Endothelial cell of umbilical vein (primary cell): ENCODE measurements at regions of chr21 and their contacts with region 1.

Region 1: GRCh38 chr21:15064576-15065391 is at the start of gene NRIP1:
- DNase-seq: peak; percentile 92
- H3K4me3 ChIP-seq: peak within 1 kb of the TSS; percentile 80 to 96 (median 92)
- H3K27ac ChIP-seq: peak within 1 kb of the TSS; percentile 95
- H3K4me1 ChIP-seq: peaks cover 30% of the 10 kb centered on the region
- H3K27me3 ChIP-seq: peaks cover 0 to 3% of the 10 kb centered on the region in 2 experiments
- CTCF ChIP-seq: no peak
- POLR2A ChIP-seq: peak; percentile 66
- total RNA-seq, gene NRIP1: 24.0 and 26.6 TPM in 2 replicates

Region 2: DNA sequence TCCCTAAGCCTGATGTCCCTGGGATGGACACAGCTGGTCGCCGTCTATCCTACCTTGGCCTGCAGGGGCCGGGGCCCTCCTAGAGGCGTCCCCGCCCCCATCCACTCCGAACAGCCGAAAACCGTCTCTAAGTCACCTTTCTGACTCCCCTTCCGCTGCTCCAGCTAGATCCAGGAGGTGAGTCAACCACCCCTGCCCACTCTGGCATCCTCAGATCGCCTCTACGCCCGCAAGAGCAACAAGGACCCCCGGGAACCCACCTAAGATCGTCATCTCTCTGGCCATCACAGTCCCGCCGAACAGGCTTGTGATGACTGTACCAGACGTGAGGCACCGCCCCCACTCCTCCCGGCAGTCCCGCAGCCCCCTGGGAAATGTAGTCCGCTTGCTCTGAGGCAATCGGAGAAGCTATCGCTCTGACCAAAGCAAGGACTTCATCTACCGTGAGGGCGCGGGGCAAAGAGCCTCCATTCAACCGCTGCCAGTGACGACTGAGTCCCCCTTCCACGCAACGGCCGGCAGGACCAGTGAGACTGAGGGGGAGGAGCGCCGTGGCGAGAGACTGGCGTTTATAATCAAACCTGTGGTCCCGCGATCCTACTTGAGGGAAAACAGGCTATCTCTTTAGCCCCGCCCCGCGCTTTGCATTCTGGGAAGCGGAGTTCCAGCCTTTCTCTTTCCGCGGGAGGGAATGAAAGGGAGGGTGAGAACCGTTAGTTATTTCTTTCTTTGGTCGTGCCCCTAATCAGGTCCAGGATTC is 681.8 kb before region 1 on chr21 and contains the start of gene HSPA13:
- CTCF ChIA-PET with region 1: no interaction called
- POLR2A ChIA-PET with region 1: no interaction called
- dilution Hi-C with region 1: no loop called
- intact Hi-C with region 1: loop called (anchors 2 kb)
- DNase-seq: peak; percentile 100
- H3K4me3 ChIP-seq: peak within 1 kb of the TSS; percentile 85 to 91 (median 85)
- H3K27ac ChIP-seq: peak within 1 kb of the TSS; percentile 93
- H3K4me1 ChIP-seq: peaks cover 26% of the 10 kb centered on the region
- H3K27me3 ChIP-seq: no peaks in the 10 kb centered on the region
- CTCF ChIP-seq: peak in 1 of 2 donors; percentile 14
- POLR2A ChIP-seq: peak; percentile 76
- total RNA-seq, gene HSPA13: 40.4 and 44.8 TPM in 2 replicates

Region 3: GRCh38 chr21:14877570-14878228 is 187.1 kb before region 1 on chr21:
- CTCF ChIA-PET with region 1: interaction called, 9 read pairs
- POLR2A ChIA-PET with region 1: interaction called, 3 read pairs
- dilution Hi-C with region 1: no loop called
- intact Hi-C with region 1: loop called (anchors 1 kb)
- DNase-seq: peak; percentile 75
- H3K4me3 ChIP-seq: no peak overlapping the region
- H3K27ac ChIP-seq: peak overlapping the region; percentile 58
- H3K4me1 ChIP-seq: peaks cover 47% of the 10 kb centered on the region
- H3K27me3 ChIP-seq: no peaks in the 10 kb centered on the region
- CTCF ChIP-seq: no peak
- POLR2A ChIP-seq: no peak

Region 4: GRCh38 chr21:15138490-15138889 is 73.7 kb after region 1 on chr21:
- CTCF ChIA-PET with region 1: no interaction called
- POLR2A ChIA-PET with region 1: no interaction called
- dilution Hi-C with region 1: no loop called
- intact Hi-C with region 1: loop called (anchors 2 kb)
- DNase-seq: no peak
- H3K4me3 ChIP-seq: no peak overlapping the region
- H3K27ac ChIP-seq: no peak overlapping the region
- H3K4me1 ChIP-seq: peaks cover 3% of the 10 kb centered on the region
- H3K27me3 ChIP-seq: peaks cover 6 to 11% of the 10 kb centered on the region in 2 experiments
- CTCF ChIP-seq: no peak
- POLR2A ChIP-seq: no peak

Region 5: GRCh38 chr21:15199414-15200364 is 134.9 kb after region 1 on chr21:
- CTCF ChIA-PET with region 1: no interaction called
- POLR2A ChIA-PET with region 1: no interaction called
- dilution Hi-C with region 1: no loop called
- intact Hi-C with region 1: no loop called
- DNase-seq: no peak
- H3K4me3 ChIP-seq: no peak overlapping the region
- H3K27ac ChIP-seq: no peak overlapping the region
- H3K4me1 ChIP-seq: no peaks in the 10 kb centered on the region
- H3K27me3 ChIP-seq: peaks cover 0 to 6% of the 10 kb centered on the region in 2 experiments
- CTCF ChIP-seq: no peak
- POLR2A ChIP-seq: no peak

Region 6: GRCh38 chr21:15483138-15483780 is 418.5 kb after region 1 on chr21:
- CTCF ChIA-PET with region 1: interaction called, 9 read pairs
- POLR2A ChIA-PET with region 1: no interaction called
- dilution Hi-C with region 1: no loop called
- intact Hi-C with region 1: loop called (anchors 1 kb)
- DNase-seq: peak; percentile 84
- H3K4me3 ChIP-seq: no peak overlapping the region
- H3K27ac ChIP-seq: no peak overlapping the region
- H3K4me1 ChIP-seq: no peaks in the 10 kb centered on the region
- H3K27me3 ChIP-seq: peaks cover 1 to 6% of the 10 kb centered on the region in 2 experiments
- CTCF ChIP-seq: peak; percentile 88 to 89
- POLR2A ChIP-seq: no peak

Region 7: DNA sequence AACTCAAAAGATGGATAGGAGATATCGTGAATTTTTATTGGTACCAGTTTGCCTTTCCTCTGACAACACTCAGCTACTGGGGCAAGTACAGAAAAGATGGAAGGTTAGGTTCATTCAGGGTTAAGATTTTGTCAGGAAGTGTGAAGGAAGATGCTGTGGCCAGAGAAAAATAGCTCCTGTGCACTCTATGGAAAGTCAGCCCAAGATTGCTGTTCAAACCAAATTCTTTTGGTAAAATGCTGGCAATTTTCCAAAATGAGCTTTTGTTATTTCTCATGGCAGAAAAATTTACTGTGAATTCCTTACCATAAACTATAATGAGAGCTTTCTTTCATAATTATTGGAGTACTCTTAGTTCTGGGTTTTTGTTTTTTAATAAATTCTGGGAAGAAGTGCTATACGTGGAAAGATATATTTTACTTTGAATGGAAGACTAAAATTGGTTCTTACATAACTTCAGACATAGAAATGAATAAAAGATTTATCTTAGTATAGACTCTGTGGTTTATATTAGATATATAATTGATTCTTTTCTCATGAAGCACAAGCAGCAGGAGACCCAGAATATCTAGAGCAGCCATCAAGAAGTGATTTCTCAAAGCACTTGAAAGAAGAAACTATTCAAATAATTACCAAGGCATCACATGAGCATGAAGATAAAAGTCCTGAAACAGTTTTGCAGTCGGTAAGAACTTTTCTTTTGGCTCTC is 777.2 kb after region 1 on chr21:
- CTCF ChIA-PET with region 1: no interaction called
- POLR2A ChIA-PET with region 1: no interaction called
- dilution Hi-C with region 1: no loop called
- intact Hi-C with region 1: loop called (anchors 10 kb)
- DNase-seq: peak; percentile 64
- H3K4me3 ChIP-seq: no peak overlapping the region
- H3K27ac ChIP-seq: peak overlapping the region; percentile 33
- H3K4me1 ChIP-seq: peaks cover 25% of the 10 kb centered on the region
- H3K27me3 ChIP-seq: no peaks in the 10 kb centered on the region
- CTCF ChIP-seq: no peak
- POLR2A ChIP-seq: no peak